Right ventricle myocardium superior (tissue), 1 donor: ENCODE measurements at regions of chr17 and their contacts with region 1.

Region 1: DNA sequence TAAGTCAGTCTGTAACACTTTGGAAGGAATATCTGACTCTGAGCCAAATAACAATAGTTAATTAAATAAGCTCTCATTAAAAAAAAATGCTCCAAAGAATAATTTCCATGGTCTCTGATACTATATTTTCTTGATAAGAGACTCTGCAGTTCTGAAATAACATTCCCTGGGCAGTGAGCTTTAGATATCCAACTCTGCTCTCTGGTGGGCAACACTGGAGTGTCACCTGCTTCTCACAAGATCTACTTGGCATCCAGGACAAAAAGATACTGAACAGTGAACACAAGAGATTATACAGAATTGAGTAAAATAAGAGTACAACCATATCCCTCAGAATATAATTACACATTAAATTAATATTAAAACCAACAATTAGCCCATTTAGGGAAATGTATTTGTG is 13.7 kb downstream of the BLMH start:
- DNase-seq: no peak
- ATAC-seq: peak; percentile 85

Region 2: DNA sequence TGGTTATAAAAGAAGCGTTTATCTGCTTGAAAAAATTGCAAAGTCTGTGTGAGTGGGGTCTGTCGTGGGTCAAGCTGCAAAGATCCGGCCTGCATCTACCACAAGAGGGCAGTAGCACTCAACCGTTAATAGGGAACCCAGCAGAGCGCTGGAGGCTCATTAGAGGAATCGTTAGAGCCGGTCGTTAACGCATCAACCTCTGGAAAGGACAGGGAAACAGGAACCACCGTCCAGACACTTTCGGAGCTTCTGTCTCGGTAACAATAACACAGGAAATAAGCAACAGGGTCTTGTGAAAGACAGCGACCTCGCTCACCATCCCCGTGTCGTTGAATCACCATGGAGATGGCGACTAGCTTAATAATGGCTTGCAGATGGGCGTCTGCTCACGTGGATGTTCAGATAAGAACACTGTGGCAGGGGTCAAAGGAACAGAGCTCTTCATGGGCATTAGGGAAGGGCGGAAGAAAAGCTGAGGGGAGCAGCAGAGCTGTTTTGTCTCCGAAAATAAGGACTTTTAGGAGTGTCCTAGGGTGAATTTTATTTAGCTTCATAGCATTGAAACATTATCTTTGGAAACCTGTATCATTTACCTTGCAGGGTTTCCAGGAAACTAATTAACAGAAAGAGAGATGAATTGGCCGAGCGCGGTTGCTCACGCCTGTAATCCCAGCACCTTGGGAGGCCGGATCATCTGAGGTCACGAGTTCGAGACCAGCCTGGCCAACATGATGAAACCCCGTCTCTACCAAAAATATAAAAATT is 173.3 kb before region 1 on chr17:
- intact Hi-C with region 1: loop called (anchors 5 kb)
- DNase-seq: peak; percentile 76
- ATAC-seq: peak; percentile 98

Region 3: DNA sequence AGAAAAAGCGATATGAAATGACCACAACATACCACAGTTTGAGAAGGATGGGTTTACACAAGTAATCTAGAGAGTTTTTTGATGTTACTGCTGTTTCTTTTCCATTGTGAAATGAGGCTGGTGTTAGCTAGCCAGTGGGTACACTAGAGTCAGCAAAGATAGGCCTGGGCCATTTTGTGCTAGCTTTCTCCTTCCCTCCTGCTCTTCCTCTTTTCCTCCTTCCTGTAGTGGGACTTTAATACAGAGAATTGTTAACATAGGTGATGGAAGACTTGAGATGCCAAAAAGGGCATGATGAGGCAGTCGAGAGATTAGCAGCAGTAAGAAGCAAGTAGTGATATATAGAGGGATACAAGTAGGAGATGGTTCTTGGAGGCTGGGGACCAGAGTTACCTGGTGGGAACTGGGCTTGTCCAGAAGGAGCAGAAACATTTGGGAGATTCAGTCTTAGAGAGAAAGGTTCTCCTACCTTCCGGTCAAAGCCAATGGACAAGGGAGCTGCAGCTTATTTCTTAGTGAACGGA is 153.7 kb before region 1 on chr17:
- intact Hi-C with region 1: loop called (anchors 5 kb)
- DNase-seq: no peak
- ATAC-seq: no peak